ENCODE measurements at regions of chr19 and their contacts with region 1.

Region 1: GRCh38 chr19:41154060-41154459 is 39.0 kb upstream of the CYP2S1 start:
- DNase-seq: no peak
- ATAC-seq: no peak
- H3K4me3 Mint-ChIP-seq: no peak overlapping the region
- H3K27ac Mint-ChIP-seq: no peak overlapping the region
- H3K4me1 Mint-ChIP-seq: peaks cover 2% of the 10 kb centered on the region
- H3K27me3 Mint-ChIP-seq: no peaks in the 10 kb centered on the region
- CTCF ChIP-seq: no peak

Region 2: GRCh38 chr19:40982594-40983101 is 171.4 kb before region 1 on chr19:
- CTCF ChIA-PET with region 1: no interaction called
- POLR2A ChIA-PET with region 1: no interaction called
- DNase-seq: peak; percentile 43
- ATAC-seq: peak; percentile 85
- H3K4me3 Mint-ChIP-seq: peak overlapping the region; percentile 31
- H3K27ac Mint-ChIP-seq: peak overlapping the region; percentile 89
- H3K4me1 Mint-ChIP-seq: peaks cover 56% of the 10 kb centered on the region
- H3K27me3 Mint-ChIP-seq: peaks cover 25% of the 10 kb centered on the region
- CTCF ChIP-seq: no peak

Region 3: GRCh38 chr19:41241859-41242258 is 87.8 kb after region 1 on chr19:
- CTCF ChIA-PET with region 1: no interaction called
- POLR2A ChIA-PET with region 1: interaction called, 10 read pairs
- DNase-seq: no peak
- ATAC-seq: no peak
- H3K4me3 Mint-ChIP-seq: no peak overlapping the region
- H3K27ac Mint-ChIP-seq: no peak overlapping the region
- H3K4me1 Mint-ChIP-seq: no peaks in the 10 kb centered on the region
- H3K27me3 Mint-ChIP-seq: no peaks in the 10 kb centered on the region
- CTCF ChIP-seq: no peak